MCF 10A (cell line): ENCODE measurements at regions of chr3 and their contacts with region 1.

Region 1: DNA sequence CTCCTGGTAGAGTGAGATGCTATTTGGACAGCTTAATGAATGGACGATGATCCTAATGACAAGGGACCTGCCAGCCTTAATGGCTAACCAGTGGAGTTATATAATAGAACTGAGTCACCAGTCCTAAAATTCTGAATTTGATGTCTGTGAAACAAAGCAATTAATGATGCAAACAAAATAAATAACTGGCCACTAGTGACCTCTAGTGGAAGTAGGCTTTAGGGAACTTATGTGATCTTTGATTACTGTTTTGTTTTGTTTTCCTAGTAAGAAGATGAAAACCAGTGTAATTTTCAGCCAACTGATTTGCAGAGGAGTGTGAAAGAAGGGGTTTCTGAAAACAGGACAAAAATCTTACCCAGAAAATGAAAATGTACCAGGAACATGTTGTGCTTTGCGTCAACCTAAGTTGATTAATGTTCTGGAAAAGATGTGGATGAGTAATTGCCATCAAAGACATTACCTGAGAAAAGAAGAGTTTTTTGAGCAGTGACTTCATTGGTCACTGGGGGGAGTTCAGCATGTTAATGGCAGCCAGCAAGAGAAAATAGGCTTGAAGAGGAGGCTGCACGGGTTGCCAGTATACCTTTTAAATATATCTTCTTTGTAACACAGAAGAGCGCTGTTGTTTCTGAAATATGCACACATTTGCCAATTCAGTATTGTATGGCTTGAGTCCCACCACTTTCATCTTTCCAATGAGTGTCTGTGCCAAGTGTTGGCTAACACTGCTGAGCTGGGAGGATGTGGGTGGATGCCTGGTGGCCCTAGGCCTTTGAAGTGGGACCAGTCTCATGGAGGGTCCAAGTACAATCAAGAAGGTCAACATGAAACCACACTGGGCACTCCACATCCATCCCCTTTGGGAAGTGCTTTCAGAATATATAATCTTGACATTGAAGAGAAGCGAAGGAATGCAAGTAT is 9.3 kb downstream of the VEPH1 start:
- DNase-seq: peak; percentile 70
- H3K4me3 Mint-ChIP-seq: no peak overlapping the region
- H3K27ac Mint-ChIP-seq: no peak overlapping the region
- H3K4me1 Mint-ChIP-seq: peaks cover 13% of the 10 kb centered on the region
- H3K27me3 Mint-ChIP-seq: no peaks in the 10 kb centered on the region
- CTCF ChIP-seq: peak; percentile 59

Region 2: DNA sequence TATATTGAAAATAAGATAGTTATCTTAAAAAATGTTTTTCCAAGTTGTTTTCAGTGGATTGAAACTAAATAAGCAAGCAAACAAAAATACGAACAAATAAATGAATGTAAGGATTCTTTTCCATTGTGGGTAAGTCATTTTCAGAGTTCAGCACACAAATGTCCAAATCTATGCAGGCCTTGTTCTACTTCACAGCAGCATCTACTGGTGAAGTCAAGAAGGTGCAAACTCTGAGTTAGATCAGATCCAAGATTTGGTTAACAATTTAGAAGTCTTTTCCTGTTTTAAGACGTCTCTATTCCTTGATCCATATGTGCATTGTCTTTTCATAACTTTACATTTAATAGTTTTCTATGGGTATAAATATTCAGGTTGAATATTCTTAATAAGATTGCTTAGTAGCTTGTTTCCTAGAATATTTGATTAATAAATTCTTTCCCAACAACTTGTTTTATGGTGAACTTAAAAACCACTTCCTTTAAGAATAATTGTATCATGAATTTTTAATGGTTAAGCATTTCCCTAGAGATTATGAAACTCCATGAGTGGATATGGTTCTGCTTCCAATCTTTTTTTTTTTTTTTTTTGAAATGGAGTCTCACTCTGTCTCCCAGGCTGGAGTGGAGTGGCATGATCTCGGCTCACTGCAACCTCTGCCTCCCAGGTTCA is 46.7 kb before region 1 on chr3:
- CTCF ChIA-PET with region 1: interaction called, 8 read pairs
- POLR2A ChIA-PET with region 1: no interaction called
- intact Hi-C with region 1: loop called (anchors 1 kb)
- DNase-seq: peak; percentile 53
- H3K4me3 Mint-ChIP-seq: no peak overlapping the region
- H3K27ac Mint-ChIP-seq: no peak overlapping the region
- H3K4me1 Mint-ChIP-seq: peaks cover 17% of the 10 kb centered on the region
- H3K27me3 Mint-ChIP-seq: no peaks in the 10 kb centered on the region
- CTCF ChIP-seq: peak; percentile 65

Region 3: DNA sequence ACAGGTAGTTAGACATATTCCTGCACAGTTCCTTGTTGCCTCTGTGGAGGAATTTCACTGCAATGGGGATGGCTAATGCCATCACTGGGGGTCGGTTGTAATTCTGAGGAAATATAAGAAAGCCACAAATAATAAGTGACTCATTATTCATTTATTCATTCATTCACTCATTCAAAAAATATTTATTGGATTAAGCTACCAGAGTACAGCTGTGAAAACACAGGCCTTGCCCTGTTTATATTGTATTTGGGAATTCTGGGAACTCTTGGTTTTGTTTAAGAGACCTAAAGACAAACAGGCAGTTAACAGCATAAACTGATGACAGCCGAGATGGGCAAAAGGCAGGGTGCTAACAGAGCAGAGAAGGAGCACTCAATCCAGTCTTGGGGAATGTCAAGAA is 33.6 kb before region 1 on chr3:
- CTCF ChIA-PET with region 1: interaction called, 12 read pairs
- POLR2A ChIA-PET with region 1: no interaction called
- intact Hi-C with region 1: no loop called
- DNase-seq: no peak
- H3K4me3 Mint-ChIP-seq: no peak overlapping the region
- H3K27ac Mint-ChIP-seq: peak overlapping the region; percentile 77
- H3K4me1 Mint-ChIP-seq: peaks cover 9% of the 10 kb centered on the region
- H3K27me3 Mint-ChIP-seq: no peaks in the 10 kb centered on the region
- CTCF ChIP-seq: no peak

Region 4: GRCh38 chr3:157746391-157746790 is 252.5 kb after region 1 on chr3:
- CTCF ChIA-PET with region 1: no interaction called
- POLR2A ChIA-PET with region 1: no interaction called
- intact Hi-C with region 1: no loop called
- DNase-seq: no peak
- H3K4me3 Mint-ChIP-seq: no peak overlapping the region
- H3K27ac Mint-ChIP-seq: no peak overlapping the region
- H3K4me1 Mint-ChIP-seq: no peaks in the 10 kb centered on the region
- H3K27me3 Mint-ChIP-seq: no peaks in the 10 kb centered on the region
- CTCF ChIP-seq: no peak